ENCODE measurements at regions of chr9 and their contacts with region 1.

Region 1: GRCh38 chr9:110828264-110828663 is 159.7 kb downstream of the MUSK start:
- DNase-seq: no peak
- H3K4me3 ChIP-seq: no peak overlapping the region
- H3K4me3 Mint-ChIP-seq: no peak overlapping the region
- H3K27ac Mint-ChIP-seq: peak overlapping the region; percentile 53
- H3K4me1 ChIP-seq: peaks cover 30% of the 10 kb centered on the region
- H3K4me1 Mint-ChIP-seq: peaks cover 37% of the 10 kb centered on the region
- H3K27me3 ChIP-seq: no peaks in the 10 kb centered on the region
- H3K27me3 Mint-ChIP-seq: no peaks in the 10 kb centered on the region
- CTCF ChIP-seq: no peak

Region 2: GRCh38 chr9:110650991-110651411 is 177.3 kb before region 1 on chr9:
- CTCF ChIA-PET with region 1: no interaction called
- POLR2A ChIA-PET with region 1: no interaction called
- intact Hi-C with region 1: loop called (anchors 10 kb)
- DNase-seq: no peak
- H3K4me3 ChIP-seq: no peak overlapping the region
- H3K4me3 Mint-ChIP-seq: no peak overlapping the region
- H3K27ac Mint-ChIP-seq: no peak overlapping the region
- H3K4me1 ChIP-seq: no peaks in the 10 kb centered on the region
- H3K4me1 Mint-ChIP-seq: no peaks in the 10 kb centered on the region
- H3K27me3 ChIP-seq: no peaks in the 10 kb centered on the region
- H3K27me3 Mint-ChIP-seq: no peaks in the 10 kb centered on the region
- CTCF ChIP-seq: no peak

Region 3: DNA sequence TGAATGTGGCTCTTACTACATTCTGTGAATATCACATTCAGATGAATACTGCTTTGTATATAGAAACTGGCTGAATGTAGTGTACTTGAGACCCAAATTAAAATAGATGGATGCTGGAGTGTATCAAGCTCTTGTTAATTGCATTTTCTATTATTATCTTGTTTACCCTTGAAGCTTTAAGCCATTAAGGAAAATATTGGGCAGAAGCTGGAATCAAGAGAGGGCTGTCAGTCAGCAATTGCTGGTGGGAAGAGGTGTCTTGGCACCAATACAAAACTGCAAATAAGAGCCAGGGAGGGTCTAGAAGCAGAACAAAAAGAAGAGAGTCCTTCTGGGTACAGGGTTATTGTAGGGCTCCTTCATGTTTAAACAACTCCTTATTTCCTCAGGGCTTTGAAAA is 120.8 kb before region 1 on chr9:
- CTCF ChIA-PET with region 1: no interaction called
- POLR2A ChIA-PET with region 1: no interaction called
- intact Hi-C with region 1: loop called (anchors 2 kb)
- DNase-seq: no peak
- H3K4me3 ChIP-seq: no peak overlapping the region
- H3K4me3 Mint-ChIP-seq: no peak overlapping the region
- H3K27ac Mint-ChIP-seq: no peak overlapping the region
- H3K4me1 ChIP-seq: peaks cover 15% of the 10 kb centered on the region
- H3K4me1 Mint-ChIP-seq: peaks cover 12% of the 10 kb centered on the region
- H3K27me3 ChIP-seq: no peaks in the 10 kb centered on the region
- H3K27me3 Mint-ChIP-seq: no peaks in the 10 kb centered on the region
- CTCF ChIP-seq: no peak

Region 4: DNA sequence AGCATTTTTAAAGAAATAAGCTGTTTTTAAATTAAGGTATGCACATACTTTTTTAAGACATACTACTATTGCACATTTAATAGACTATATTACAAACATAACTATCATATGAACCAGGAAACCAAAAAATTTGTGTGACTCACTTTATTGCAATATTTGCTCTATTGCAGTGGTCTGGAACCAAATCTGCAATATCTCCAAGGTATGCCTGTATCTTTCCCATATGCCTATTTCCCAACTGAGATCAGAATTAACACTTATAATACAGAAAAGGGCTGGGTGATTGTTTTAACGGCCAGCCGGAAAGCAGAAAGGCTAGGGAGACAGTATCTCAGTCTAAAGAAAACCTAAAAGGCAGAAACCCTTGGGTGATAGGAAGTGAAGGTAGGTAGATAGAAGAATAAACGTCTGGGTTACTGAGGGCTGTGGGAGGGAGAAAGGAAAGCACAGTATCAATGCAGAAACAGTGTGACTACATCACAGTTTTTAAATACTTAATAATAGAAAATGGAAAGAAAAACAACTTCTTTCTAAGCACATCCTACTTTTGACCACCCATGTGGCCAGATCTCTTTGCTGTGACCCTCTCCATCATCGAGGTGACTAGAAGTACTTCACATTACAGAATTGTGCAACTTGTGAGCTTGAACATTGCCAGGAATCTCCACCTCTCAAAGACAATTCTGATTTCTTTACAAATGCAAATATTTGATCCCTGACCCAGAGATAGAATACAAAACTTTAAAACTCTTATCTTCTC is 83.6 kb after region 1 on chr9:
- CTCF ChIA-PET with region 1: no interaction called
- POLR2A ChIA-PET with region 1: no interaction called
- intact Hi-C with region 1: loop called (anchors 5 kb)
- DNase-seq: peak in 1 of 2 experiments; percentile 35
- H3K4me3 ChIP-seq: no peak overlapping the region
- H3K4me3 Mint-ChIP-seq: peak overlapping the region; percentile 59
- H3K27ac Mint-ChIP-seq: peak overlapping the region; percentile 68
- H3K4me1 ChIP-seq: peaks cover 32% of the 10 kb centered on the region
- H3K4me1 Mint-ChIP-seq: peaks cover 34% of the 10 kb centered on the region
- H3K27me3 ChIP-seq: no peaks in the 10 kb centered on the region
- H3K27me3 Mint-ChIP-seq: no peaks in the 10 kb centered on the region
- CTCF ChIP-seq: no peak

Measured in Caco-2 (cell line).